Caco-2 (cell line): ENCODE measurements at regions of chr2 and their contacts with region 1.

Region 1: DNA sequence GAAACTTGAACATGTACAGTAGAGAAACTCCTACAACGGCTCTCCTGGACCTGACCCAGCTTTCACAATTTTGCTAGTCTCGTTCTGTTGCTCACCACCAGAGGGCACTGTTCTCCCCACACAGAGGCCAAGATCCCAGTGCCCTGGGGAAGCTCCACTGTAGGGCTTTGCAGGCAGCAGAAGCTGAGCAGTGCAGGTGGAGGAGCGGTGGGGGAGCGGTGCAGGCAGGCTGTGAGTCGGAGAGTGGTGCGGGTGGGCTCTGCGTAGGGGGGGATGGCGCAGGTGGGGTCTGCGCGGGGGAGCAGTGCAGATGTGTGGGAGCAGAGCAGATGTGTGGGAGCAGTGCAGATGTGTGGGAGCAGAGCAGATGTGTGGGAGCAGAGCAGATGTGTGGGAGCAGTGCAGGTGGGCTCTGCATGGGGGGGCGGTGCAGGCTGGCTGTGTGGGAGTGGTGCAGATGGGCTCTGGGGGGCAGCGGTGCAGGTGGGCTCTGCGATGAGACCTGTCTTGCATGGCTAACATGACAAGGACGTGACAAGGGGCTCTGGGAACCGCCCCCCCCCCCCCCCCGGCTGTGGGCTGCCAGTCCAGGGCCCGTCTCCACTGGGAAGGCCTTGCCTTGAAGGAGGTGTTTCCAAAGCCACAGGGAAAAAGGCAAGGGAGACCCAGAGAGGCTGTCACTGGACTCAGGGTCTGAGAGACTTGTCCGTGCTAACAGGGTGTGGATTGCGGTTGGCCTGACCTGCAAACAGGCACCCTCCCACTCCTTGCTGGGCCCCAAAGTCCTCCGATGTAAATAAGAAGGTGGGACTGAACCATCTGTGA is 7.3 kb downstream of the CYS1 start:
- DNase-seq: peak; percentile 90
- H3K4me3 ChIP-seq: no peak overlapping the region
- H3K4me3 Mint-ChIP-seq: no peak overlapping the region
- H3K27ac Mint-ChIP-seq: no peak overlapping the region
- H3K4me1 ChIP-seq: no peaks in the 10 kb centered on the region; the same call in 1 of the 2 replicates
- H3K4me1 Mint-ChIP-seq: peaks cover 6% of the 10 kb centered on the region
- H3K27me3 ChIP-seq: no peaks in the 10 kb centered on the region
- H3K27me3 Mint-ChIP-seq: peaks cover 15% of the 10 kb centered on the region
- CTCF ChIP-seq: peak; percentile 91 to 92

Region 2: GRCh38 chr2:9843229-9844035 is 229.4 kb before region 1 on chr2 and contains the start of gene TAF1B:
- CTCF ChIA-PET with region 1: interaction called, 11 read pairs
- POLR2A ChIA-PET with region 1: no interaction called
- intact Hi-C with region 1: no loop called
- DNase-seq: peak; percentile 94 to 96
- H3K4me3 ChIP-seq: peak within 1 kb of the TSS; percentile 74
- H3K4me3 Mint-ChIP-seq: peak within 1 kb of the TSS; percentile 89
- H3K27ac Mint-ChIP-seq: peak within 1 kb of the TSS; percentile 89
- H3K4me1 ChIP-seq: 0 out of 2 replicates have a peak, but pooled peaks cover 8% of the 10 kb centered on the region
- H3K4me1 Mint-ChIP-seq: peaks cover 22% of the 10 kb centered on the region
- H3K27me3 ChIP-seq: no peaks in the 10 kb centered on the region
- H3K27me3 Mint-ChIP-seq: no peaks in the 10 kb centered on the region
- CTCF ChIP-seq: peak; percentile 26 to 30
- total RNA-seq, gene TAF1B: 24.8 and 25.3 TPM in 2 replicates

Region 3: DNA sequence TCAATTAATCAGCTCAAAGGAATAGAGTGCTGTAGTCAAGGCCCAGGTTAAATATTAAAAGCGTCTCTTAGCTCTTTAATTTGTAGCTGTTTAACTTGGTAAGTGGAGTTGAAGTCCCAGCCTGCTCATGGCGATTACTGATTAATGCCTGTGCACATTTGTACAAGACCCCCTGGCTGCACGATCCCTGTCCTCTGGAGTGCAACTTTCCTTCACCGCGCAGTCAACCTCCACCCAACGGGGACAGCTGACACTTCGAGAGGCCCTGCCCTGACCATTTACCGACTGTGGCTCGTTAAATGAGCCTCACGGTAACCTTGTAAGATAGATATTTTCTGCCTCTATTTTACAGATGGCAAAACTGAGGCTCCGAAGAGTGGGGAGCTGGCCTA is 12.8 kb after region 1 on chr2:
- CTCF ChIA-PET with region 1: interaction called, 12 read pairs
- POLR2A ChIA-PET with region 1: no interaction called
- intact Hi-C with region 1: no loop called
- DNase-seq: no peak
- H3K4me3 ChIP-seq: no peak overlapping the region
- H3K4me3 Mint-ChIP-seq: no peak overlapping the region
- H3K27ac Mint-ChIP-seq: no peak overlapping the region
- H3K4me1 ChIP-seq: peaks cover 8% of the 10 kb centered on the region; the same call in 1 of the 2 replicates
- H3K4me1 Mint-ChIP-seq: peaks cover 7% of the 10 kb centered on the region
- H3K27me3 ChIP-seq: no peaks in the 10 kb centered on the region
- H3K27me3 Mint-ChIP-seq: peaks cover 7% of the 10 kb centered on the region
- CTCF ChIP-seq: no peak

Region 4: GRCh38 chr2:10097352-10098148 is 24.7 kb after region 1 on chr2:
- CTCF ChIA-PET with region 1: interaction called, 210 read pairs
- POLR2A ChIA-PET with region 1: interaction called, 4 read pairs
- intact Hi-C with region 1: loop called (anchors 1 kb)
- DNase-seq: peak; percentile 78 to 85
- H3K4me3 ChIP-seq: no peak overlapping the region
- H3K4me3 Mint-ChIP-seq: no peak overlapping the region
- H3K27ac Mint-ChIP-seq: no peak overlapping the region
- H3K4me1 ChIP-seq: no peaks in the 10 kb centered on the region
- H3K4me1 Mint-ChIP-seq: no peaks in the 10 kb centered on the region
- H3K27me3 ChIP-seq: no peaks in the 10 kb centered on the region
- H3K27me3 Mint-ChIP-seq: no peaks in the 10 kb centered on the region
- CTCF ChIP-seq: peak; percentile 88 to 98

Region 5: GRCh38 chr2:10220902-10221391 is 148.1 kb after region 1 on chr2:
- CTCF ChIA-PET with region 1: no interaction called
- POLR2A ChIA-PET with region 1: no interaction called
- intact Hi-C with region 1: loop called (anchors 10 kb)
- DNase-seq: no peak
- H3K4me3 ChIP-seq: no peak overlapping the region
- H3K4me3 Mint-ChIP-seq: no peak overlapping the region
- H3K27ac Mint-ChIP-seq: no peak overlapping the region
- H3K4me1 ChIP-seq: peaks cover 17% of the 10 kb centered on the region
- H3K4me1 Mint-ChIP-seq: peaks cover 26% of the 10 kb centered on the region
- H3K27me3 ChIP-seq: no peaks in the 10 kb centered on the region
- H3K27me3 Mint-ChIP-seq: no peaks in the 10 kb centered on the region
- CTCF ChIP-seq: no peak